Heart left ventricle (tissue), 16 donors: ENCODE measurements at regions of chr21 and their contacts with region 1.

Region 1: GRCh38 chr21:36419996-36420395 is 34.8 kb downstream of the CHAF1B start:
- DNase-seq: peak; percentile 81 to 93 (median 85)
- ATAC-seq: peak; percentile 87 to 95 (median 94)
- H3K4me3 ChIP-seq: no peak overlapping the region
- H3K27ac ChIP-seq: peak overlapping the region in 1 of 12 donors; percentile 9
- H3K4me1 ChIP-seq: peaks cover 0 to 21% (median 7%) of the 10 kb centered on the region in 12 donors
- H3K27me3 ChIP-seq: no peaks in the 10 kb centered on the region
- CTCF ChIP-seq: peak; percentile 68 to 90 (median 80)
- POLR2A ChIP-seq: no peak

Region 2: GRCh38 chr21:35697321-35697808 is 722.6 kb before region 1 on chr21:
- intact Hi-C with region 1: no loop called
- DNase-seq: peak; percentile 72 to 92 (median 78)
- ATAC-seq: peak in 3 of 4 donors; percentile 80 to 85 (median 83)
- H3K4me3 ChIP-seq: no peak overlapping the region
- H3K27ac ChIP-seq: no peak overlapping the region
- H3K4me1 ChIP-seq: peaks cover 0 to 22% (median 13%) of the 10 kb centered on the region in 12 donors
- H3K27me3 ChIP-seq: no peaks in the 10 kb centered on the region
- CTCF ChIP-seq: no peak
- POLR2A ChIP-seq: no peak

Region 3: DNA sequence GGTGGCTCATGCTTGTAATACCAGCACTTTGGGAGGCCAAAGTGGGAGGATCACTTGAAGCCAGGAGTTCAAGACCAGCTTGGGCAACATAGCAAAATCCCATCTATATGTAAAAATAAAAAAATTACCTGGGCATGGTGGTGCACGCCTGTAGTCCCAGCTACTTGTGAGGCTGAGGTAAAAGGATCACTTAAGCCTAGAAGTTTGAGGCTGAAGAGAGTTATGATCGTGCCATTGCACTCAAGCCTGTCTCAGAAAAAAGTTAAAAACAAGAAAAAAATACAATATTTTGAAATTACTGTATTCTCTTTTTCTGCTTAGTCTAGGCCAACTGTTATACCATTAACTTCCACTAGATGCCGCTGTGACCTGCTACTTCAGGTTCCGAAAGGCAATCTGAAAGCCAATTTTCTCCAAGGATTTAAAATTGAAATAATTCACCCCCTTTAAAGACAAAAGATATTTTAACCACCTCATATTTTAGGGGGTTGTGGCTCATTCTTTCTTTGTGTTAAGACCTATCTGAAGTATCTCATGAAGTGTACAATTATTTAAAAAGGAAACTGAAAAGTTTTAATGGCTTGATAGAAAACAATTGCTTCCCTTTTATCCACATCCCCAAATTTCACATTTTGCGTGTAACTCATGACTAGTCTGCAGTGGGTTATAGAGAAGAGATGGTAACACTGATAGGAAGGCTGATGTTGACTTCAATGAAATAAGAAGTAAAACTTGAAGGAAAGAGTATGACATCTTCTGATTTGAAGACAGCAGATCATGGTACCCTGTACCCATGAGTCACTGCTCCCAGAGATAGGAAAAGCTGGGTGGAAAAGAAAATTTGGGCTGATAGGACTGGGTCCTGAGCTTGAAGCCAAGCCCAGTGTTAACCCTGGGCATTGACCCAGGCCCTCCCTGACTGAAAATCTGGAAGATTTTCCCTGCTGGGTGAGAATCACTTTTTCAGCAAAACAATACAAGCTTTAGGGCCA is 84.4 kb after region 1 on chr21:
- intact Hi-C with region 1: loop called in 2 of 10 experiments (anchors 5 kb)
- DNase-seq: peak in 1 of 5 donors; percentile 21
- ATAC-seq: no peak
- H3K4me3 ChIP-seq: no peak overlapping the region
- H3K27ac ChIP-seq: no peak overlapping the region
- H3K4me1 ChIP-seq: peaks cover 0 to 8% (median 0%) of the 10 kb centered on the region in 12 donors
- H3K27me3 ChIP-seq: peaks cover 0 to 8% (median 0%) of the 10 kb centered on the region in 9 donors
- CTCF ChIP-seq: peak; percentile 90 to 97 (median 92)
- POLR2A ChIP-seq: no peak